Activated CD4-positive, alpha-beta memory T cell treated with anti-CD3 and anti-CD28 coated beads for 36 hours (primary cell): ENCODE measurements at regions of chr4 and their contacts with region 1.

Region 1: DNA sequence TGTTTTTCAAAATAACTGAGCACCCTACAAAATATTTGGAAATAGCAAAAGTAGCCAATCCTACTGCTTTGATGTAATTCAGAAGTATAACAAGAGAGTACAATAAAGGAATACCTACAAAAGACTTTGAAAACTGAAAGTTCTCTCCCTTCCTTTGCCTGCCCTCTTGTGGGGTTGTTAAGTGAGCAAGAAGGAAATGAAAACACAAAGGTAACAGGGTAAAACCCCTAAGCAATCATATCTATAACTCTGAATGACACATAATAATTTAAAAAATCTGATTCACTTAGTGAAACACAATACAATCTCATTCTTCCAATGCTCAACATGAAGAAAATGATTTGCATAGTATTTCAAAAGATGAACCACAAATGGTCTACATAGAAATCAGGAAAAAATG is 98.2 kb downstream of the FRYL start:
- DNase-seq: no peak
- H3K4me3 Mint-ChIP-seq: no peak overlapping the region
- H3K27ac Mint-ChIP-seq: peak overlapping the region; percentile 39
- H3K4me1 Mint-ChIP-seq: peaks cover 36% of the 10 kb centered on the region
- H3K27me3 Mint-ChIP-seq: no peaks in the 10 kb centered on the region

Region 2: DNA sequence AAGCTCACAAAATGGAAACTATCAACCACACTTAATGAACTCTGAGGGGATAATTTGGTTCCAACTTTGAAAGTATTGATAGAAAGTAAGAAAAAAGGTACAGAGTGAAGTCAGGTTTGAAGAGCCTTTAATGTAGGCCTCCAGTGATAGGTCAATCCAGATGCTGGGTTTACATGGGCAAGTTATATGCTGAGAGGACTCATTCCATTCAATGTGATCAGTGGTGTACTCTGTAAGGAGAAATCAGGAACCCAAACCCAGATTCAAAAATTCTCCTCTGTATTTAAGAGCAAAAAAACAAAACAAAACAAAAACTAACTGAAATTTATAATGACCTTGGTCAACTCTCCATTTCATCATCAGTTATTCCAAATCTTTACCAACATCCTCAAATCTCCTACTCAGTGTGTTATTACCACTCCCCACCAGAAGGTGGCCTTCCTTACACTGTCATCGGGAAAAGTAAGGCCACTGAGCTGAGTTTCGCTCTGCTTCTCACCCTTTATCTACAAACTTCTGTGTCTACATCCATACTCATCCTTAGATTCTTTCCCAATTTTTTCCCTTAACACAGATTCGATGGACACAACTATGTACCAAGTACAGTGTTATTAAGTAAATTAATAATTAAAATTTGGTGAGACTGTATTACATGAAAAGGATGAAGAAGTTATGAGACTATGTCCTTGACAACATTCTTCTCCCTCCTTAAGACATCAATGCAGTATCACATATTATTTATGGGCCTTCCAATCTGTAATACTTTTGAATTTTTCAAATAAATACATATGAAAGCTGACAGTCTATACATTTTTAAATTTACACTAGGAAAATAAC is 103.5 kb before region 1 on chr4:
- CTCF ChIA-PET with region 1: interaction called, 42 read pairs
- POLR2A ChIA-PET with region 1: no interaction called
- intact Hi-C with region 1: loop called (anchors 1 kb)
- DNase-seq: peak; percentile 37
- H3K4me3 Mint-ChIP-seq: no peak overlapping the region
- H3K27ac Mint-ChIP-seq: no peak overlapping the region
- H3K4me1 Mint-ChIP-seq: peaks cover 4% of the 10 kb centered on the region
- H3K27me3 Mint-ChIP-seq: no peaks in the 10 kb centered on the region

Region 3: GRCh38 chr4:48698029-48698971 is 16.4 kb after region 1 on chr4:
- CTCF ChIA-PET with region 1: interaction called, 3 read pairs
- POLR2A ChIA-PET with region 1: interaction called, 4 read pairs
- intact Hi-C with region 1: loop called (anchors 1 kb)
- DNase-seq: no peak
- H3K4me3 Mint-ChIP-seq: no peak overlapping the region
- H3K27ac Mint-ChIP-seq: no peak overlapping the region
- H3K4me1 Mint-ChIP-seq: peaks cover 56% of the 10 kb centered on the region
- H3K27me3 Mint-ChIP-seq: no peaks in the 10 kb centered on the region

Region 4: GRCh38 chr4:48739560-48740019 is 57.7 kb after region 1 on chr4:
- CTCF ChIA-PET with region 1: no interaction called
- POLR2A ChIA-PET with region 1: no interaction called
- intact Hi-C with region 1: loop called (anchors 2 kb)
- DNase-seq: no peak
- H3K4me3 Mint-ChIP-seq: no peak overlapping the region
- H3K27ac Mint-ChIP-seq: peak overlapping the region; percentile 38
- H3K4me1 Mint-ChIP-seq: peaks cover 69% of the 10 kb centered on the region
- H3K27me3 Mint-ChIP-seq: no peaks in the 10 kb centered on the region

Region 5: GRCh38 chr4:48963042-48963679 is 281.3 kb after region 1 on chr4:
- CTCF ChIA-PET with region 1: no interaction called
- POLR2A ChIA-PET with region 1: no interaction called
- intact Hi-C with region 1: loop called (anchors 5 kb)
- DNase-seq: peak; percentile 77
- H3K4me3 Mint-ChIP-seq: no peak overlapping the region
- H3K27ac Mint-ChIP-seq: no peak overlapping the region
- H3K4me1 Mint-ChIP-seq: no peaks in the 10 kb centered on the region
- H3K27me3 Mint-ChIP-seq: no peaks in the 10 kb centered on the region

Region 6: DNA sequence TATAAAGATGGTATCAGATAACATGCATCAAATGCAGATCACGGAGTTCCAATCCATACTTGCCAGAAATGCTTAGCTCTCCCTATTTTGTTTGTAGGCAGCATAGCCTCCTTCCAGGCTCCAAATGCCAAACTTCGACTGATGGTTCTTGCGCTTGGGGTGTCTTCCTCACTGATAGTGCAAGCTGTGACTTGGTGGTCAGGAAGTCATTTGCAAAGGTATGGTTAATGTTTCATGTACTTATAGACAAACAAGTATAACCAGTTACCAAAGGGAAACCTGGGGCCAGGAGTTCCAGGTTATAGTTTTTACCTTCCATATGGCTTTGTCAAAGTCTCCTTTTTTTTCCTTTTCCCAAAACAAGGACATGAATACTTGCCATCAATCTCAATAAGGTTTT is 309.5 kb after region 1 on chr4:
- CTCF ChIA-PET with region 1: no interaction called
- POLR2A ChIA-PET with region 1: no interaction called
- intact Hi-C with region 1: no loop called
- DNase-seq: no peak
- H3K4me3 Mint-ChIP-seq: no peak overlapping the region
- H3K27ac Mint-ChIP-seq: no peak overlapping the region
- H3K4me1 Mint-ChIP-seq: no peaks in the 10 kb centered on the region
- H3K27me3 Mint-ChIP-seq: peaks cover 23% of the 10 kb centered on the region